Activated CD4-positive, alpha-beta memory T cell treated with anti-CD3 and anti-CD28 coated beads for 36 hours (primary cell): ENCODE measurements at regions of chr11 and their contacts with region 1.

Region 1: DNA sequence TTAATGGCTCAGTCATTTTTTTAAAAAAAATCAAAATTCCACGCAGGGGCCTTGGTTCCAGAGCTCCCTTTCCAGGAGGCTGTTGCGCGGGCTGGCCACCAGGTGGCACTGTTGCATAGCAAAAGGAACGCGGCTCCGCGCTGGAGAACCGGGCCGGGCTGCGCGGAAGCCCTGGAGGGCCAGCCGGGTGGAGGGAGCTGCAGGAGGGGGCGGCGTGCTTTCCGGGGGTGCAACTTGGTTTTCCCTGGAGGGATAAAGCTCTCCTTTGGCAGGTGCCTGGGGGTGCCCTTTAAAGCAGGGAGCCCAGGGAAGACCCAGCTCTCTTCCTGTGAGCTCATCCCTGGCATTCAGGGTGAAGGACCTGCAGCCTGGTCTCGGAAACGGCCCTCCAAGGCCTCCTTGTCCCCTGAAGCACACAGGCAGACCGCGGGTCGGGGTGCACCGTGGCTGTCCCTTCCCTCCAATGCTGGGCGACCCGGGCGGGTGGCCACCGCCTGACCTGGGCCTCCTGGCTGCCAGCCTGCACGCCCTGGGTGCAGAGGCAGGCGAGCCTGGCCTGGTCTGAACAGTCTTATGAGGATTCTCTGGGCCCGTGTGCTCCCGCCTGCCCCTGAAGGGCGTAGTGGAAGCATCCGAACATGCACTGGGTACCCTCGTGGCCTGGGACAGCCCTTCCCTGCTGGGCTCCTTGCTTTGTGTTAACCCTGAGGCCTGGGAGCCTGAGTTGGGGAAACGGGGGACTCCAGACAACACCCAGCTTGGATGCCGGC is 23.4 kb downstream of the KRTAP5-5 start:
- DNase-seq: peak; percentile 79
- H3K4me3 Mint-ChIP-seq: no peak overlapping the region
- H3K27ac Mint-ChIP-seq: no peak overlapping the region
- H3K4me1 Mint-ChIP-seq: no peaks in the 10 kb centered on the region
- H3K27me3 Mint-ChIP-seq: peaks cover 20% of the 10 kb centered on the region

Region 2: GRCh38 chr11:1633864-1634263 is 19.1 kb before region 1 on chr11:
- CTCF ChIA-PET with region 1: interaction called, 17 read pairs
- POLR2A ChIA-PET with region 1: no interaction called
- intact Hi-C with region 1: no loop called
- DNase-seq: no peak
- H3K4me3 Mint-ChIP-seq: no peak overlapping the region
- H3K27ac Mint-ChIP-seq: no peak overlapping the region
- H3K4me1 Mint-ChIP-seq: peaks cover 6% of the 10 kb centered on the region
- H3K27me3 Mint-ChIP-seq: peaks cover 28% of the 10 kb centered on the region

Region 3: DNA sequence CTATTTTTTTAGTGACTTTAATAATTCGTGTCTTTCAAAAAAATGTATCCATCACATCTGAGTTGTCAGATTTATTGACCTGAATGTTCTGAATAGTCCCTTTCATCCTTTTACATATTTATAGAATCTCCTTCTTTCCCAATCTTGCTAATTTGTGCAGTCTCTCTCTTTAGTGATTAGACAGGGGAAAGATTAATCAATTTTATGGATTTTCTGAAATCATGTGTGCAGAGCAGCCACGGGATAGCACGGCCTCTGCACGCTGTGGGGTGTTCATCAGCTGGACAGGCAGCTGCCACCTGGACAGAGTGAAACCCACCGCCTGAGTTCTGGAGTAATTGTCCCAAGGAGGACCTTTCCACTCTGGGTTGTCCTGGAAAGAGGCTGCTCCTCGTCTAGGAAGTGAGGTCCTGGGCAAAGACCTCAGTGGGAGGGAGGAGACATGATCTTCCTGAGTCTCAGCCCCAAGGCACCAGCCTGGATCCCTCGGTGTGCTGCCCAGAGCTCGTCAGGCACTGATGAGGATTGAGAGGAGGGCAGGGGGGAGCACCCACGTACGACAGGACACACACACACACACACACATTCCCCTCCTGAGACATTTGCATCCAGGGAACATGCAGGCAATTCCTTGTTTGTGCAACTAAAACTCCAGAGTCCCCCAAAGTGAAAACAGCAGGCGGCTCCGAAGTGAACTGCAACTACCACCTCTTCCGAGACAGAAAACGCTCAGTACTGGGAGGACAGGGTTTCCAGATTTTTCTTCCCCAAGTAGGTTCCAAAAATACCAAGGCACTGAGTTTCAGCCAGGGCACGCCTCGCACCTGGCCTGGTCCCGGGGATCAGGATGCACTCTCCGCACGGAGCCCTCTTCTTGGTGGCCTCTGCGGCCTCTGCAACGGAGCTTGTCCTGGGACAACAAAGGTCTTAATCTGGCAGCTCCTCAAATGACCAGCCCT is 21.5 kb after region 1 on chr11:
- CTCF ChIA-PET with region 1: interaction called, 12 read pairs
- POLR2A ChIA-PET with region 1: no interaction called
- intact Hi-C with region 1: no loop called
- DNase-seq: no peak
- H3K4me3 Mint-ChIP-seq: no peak overlapping the region
- H3K27ac Mint-ChIP-seq: no peak overlapping the region
- H3K4me1 Mint-ChIP-seq: no peaks in the 10 kb centered on the region
- H3K27me3 Mint-ChIP-seq: peaks cover 24% of the 10 kb centered on the region

Region 4: DNA sequence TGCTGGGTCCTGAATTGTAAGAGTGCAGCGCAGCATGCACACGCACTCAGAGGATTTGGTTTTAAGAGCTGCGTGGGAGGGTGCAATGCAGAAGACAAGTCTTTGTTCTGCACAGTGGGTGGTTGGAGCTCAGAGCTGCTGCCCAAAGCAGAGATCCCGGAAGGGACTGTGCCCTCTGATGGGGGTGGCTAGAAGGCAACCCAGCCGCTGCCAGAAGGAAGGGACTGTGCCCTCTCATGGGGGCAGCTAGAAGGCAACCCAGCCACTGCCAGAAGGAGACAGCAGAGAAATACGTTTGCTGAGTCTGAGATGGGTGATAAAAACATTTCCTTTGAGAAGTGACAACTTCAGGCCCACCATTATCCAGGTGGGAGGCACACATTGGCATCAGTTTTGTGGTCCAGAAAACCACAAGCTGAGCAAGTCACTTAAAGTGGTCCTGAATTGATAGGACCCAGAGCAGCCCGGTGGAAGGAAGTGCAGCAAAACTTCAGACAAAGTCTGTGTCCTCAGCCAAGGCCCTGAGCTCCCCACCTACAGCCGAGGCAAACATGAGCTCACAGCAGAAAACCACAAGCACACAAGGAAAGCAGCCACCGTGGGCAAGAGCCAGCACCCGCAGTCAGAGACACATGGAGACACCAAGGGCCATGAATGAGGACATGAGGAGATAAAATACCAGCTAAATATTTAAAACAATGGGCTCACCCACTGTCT is 48.3 kb after region 1 on chr11:
- CTCF ChIA-PET with region 1: interaction called, 11 read pairs
- POLR2A ChIA-PET with region 1: no interaction called
- intact Hi-C with region 1: no loop called
- DNase-seq: peak; percentile 29
- H3K4me3 Mint-ChIP-seq: no peak overlapping the region
- H3K27ac Mint-ChIP-seq: no peak overlapping the region
- H3K4me1 Mint-ChIP-seq: peaks cover 9% of the 10 kb centered on the region
- H3K27me3 Mint-ChIP-seq: peaks cover 3% of the 10 kb centered on the region

Region 5: DNA sequence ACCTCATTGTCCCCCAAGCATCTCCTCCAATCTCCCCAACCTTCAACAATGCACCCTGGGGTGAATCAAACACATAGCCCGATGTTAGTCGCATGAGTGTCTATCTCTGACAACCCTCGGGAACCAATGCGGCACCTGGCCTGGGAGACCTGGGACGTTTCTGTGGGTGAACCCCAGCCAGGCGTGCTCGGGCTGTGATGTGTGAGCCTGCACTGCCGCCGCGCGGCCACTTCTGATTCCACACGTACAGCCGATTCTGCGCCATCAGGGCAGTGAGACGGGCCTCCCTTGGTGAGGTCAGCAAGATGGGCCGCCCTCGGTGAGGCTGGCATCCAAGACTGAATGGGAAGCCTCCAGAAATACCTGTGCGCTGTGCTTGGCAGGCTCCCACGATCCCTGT is 349.9 kb after region 1 on chr11:
- CTCF ChIA-PET with region 1: interaction called, 36 read pairs
- POLR2A ChIA-PET with region 1: no interaction called
- intact Hi-C with region 1: no loop called
- DNase-seq: no peak
- H3K4me3 Mint-ChIP-seq: no peak overlapping the region
- H3K27ac Mint-ChIP-seq: no peak overlapping the region
- H3K4me1 Mint-ChIP-seq: no peaks in the 10 kb centered on the region
- H3K27me3 Mint-ChIP-seq: no peaks in the 10 kb centered on the region